Activated B cell treated with CpG ODN at 0.5 μM for 24 hours (primary cell): ENCODE measurements at regions of chr3 and their contacts with region 1.

Region 1: GRCh38 chr3:171113714-171114113 is 87.2 kb upstream of the SLC2A2 start:
- DNase-seq: no peak
- ATAC-seq: no peak
- H3K4me3 Mint-ChIP-seq: no peak overlapping the region
- H3K27ac Mint-ChIP-seq: no peak overlapping the region
- H3K4me1 Mint-ChIP-seq: no peaks in the 10 kb centered on the region
- H3K27me3 Mint-ChIP-seq: no peaks in the 10 kb centered on the region
- CTCF ChIP-seq: no peak

Region 2: GRCh38 chr3:171165983-171166382 is 52.3 kb after region 1 on chr3:
- CTCF ChIA-PET with region 1: no interaction called
- POLR2A ChIA-PET with region 1: interaction called, 13 read pairs
- intact Hi-C with region 1: no loop called
- DNase-seq: no peak
- ATAC-seq: no peak
- H3K4me3 Mint-ChIP-seq: no peak overlapping the region
- H3K27ac Mint-ChIP-seq: no peak overlapping the region
- H3K4me1 Mint-ChIP-seq: peaks cover 4% of the 10 kb centered on the region
- H3K27me3 Mint-ChIP-seq: no peaks in the 10 kb centered on the region
- CTCF ChIP-seq: no peak